ENCODE measurements at regions of chr1 and their contacts with region 1.

Region 1: DNA sequence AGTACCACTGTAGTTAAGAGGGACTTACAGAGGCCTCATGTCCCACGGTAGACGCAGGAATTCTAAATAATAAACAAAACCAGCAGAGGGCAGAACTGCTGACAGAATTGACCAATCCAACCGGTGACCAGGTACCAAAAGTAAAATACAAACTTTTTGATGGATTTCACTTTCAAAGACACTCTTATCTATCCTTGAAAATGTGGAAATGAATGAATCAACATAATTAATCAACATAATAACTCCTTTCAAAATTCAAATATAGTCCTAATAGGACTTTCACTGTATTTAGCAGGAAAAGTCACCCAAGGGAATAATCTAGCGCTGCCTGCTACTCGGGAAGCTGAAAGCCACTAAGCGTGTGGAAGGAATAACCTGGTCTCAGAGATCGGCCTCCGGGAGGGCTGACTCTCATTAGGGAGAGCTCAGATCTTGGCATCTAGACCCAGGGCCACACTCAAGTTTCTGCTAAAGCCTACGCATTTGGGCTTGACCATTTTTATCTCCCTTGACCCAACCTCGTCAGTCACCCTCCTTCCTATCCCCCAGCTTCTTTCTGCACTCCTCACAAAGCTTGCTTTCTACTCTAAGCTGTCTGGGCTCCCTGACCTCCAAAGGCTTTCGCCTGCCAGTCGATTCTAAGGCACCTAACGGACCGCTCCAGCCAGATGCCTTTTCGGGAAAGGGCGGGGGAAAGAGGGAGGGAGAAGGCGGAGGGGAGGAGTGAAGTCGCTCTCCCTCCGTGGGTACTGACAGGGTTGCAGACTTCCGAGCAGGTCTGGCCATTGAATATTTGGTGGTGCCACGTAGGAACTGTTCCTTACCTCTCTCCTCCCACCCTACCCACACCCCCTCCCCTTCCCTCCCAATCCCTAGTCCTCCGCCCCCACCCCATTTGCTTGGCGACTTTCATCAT is 1.6 kb downstream of the COL11A1 start:
- DNase-seq: no peak
- ATAC-seq: peak; percentile 70 to 92

Region 2: GRCh38 chr1:103146166-103146565 is 39.5 kb after region 1 on chr1:
- intact Hi-C with region 1: no loop called
- DNase-seq: no peak
- ATAC-seq: no peak

Region 3: DNA sequence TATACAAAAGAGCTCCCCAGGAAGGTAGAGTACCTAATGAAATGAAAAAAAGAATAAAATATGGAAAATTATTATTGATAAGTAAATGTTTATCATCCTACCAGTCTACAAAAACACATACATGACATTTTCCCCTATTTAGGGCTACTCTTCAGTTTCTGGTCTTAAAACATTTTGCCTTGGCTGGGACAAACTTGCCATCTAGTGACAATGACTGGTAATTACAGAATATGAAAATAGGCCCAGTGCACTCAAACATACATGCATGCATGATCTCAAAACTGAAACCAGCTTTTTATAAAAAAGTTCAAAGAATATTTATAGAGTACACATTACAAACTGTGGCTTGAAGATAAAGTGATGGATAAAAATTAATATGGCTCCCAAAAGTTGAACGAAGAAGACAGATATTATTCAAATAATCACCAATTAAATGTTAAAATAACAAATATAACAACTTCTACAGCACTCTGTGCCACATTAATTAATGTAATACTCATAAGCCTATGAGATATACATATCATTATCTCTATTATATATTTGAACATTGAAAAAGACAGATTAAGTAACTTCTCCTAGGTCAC is 408.3 kb after region 1 on chr1:
- intact Hi-C with region 1: loop called in 1 of 2 experiments (anchors 2 kb)
- DNase-seq: no peak
- ATAC-seq: peak; percentile 44 to 63

Measured in left cardiac atrium (tissue), 4 donors.